Right cardiac atrium (tissue), 5 donors: ENCODE measurements at regions of chr1 and their contacts with region 1.

Region 1: GRCh38 chr1:209674957-209675564 is at the start of gene G0S2:
- DNase-seq: peak; percentile 87 to 95 (median 95)
- ATAC-seq: peak; percentile 90 to 93
- H3K4me3 ChIP-seq: peak within 1 kb of the TSS; percentile 27
- H3K27ac ChIP-seq: peak within 1 kb of the TSS; percentile 65
- H3K4me1 ChIP-seq: peaks cover 8% of the 10 kb centered on the region
- H3K27me3 ChIP-seq: no peaks in the 10 kb centered on the region
- total RNA-seq, gene G0S2: 77.4 to 414 (median 243) TPM

Region 2: GRCh38 chr1:209635850-209636249 is 39.2 kb before region 1 on chr1:
- intact Hi-C with region 1: loop called in 1 of 4 experiments (anchors 5 kb)
- DNase-seq: no peak
- ATAC-seq: no peak
- H3K4me3 ChIP-seq: no peak overlapping the region
- H3K27ac ChIP-seq: no peak overlapping the region
- H3K4me1 ChIP-seq: peaks cover 2% of the 10 kb centered on the region
- H3K27me3 ChIP-seq: no peaks in the 10 kb centered on the region